ENCODE measurements at regions of chr3 and their contacts with region 1.

Region 1: DNA sequence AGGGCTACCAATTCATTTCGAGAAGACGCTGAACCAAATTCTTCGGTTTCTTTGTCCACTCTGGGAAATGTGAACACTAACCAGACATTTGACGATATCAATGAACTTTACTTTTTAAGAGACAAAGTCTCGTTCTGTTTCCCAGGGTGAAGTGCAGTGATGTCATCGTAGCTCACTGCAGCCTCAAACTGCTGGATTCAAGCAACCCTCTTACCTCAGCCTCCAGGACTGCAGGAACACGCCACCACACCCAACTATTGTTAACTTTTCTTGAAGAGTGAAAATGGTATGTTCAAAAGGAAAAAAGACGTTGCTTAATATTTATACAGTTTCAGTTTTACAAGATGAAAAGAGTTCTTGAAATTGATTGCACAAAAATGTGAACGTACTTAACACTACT is 30.6 kb downstream of the MB21D2 start:
- DNase-seq: no peak
- H3K4me3 Mint-ChIP-seq: peak overlapping the region; percentile 61
- H3K27ac Mint-ChIP-seq: peak overlapping the region; percentile 80
- H3K4me1 Mint-ChIP-seq: peaks cover 75% of the 10 kb centered on the region
- H3K27me3 Mint-ChIP-seq: no peaks in the 10 kb centered on the region

Region 2: GRCh38 chr3:192899540-192899982 is 12.5 kb after region 1 on chr3:
- CTCF ChIA-PET with region 1: interaction called, 5 read pairs
- POLR2A ChIA-PET with region 1: interaction called, 93 read pairs
- DNase-seq: no peak
- H3K4me3 Mint-ChIP-seq: no peak overlapping the region
- H3K27ac Mint-ChIP-seq: peak overlapping the region; percentile 97
- H3K4me1 Mint-ChIP-seq: peaks cover 78% of the 10 kb centered on the region
- H3K27me3 Mint-ChIP-seq: peaks cover 2% of the 10 kb centered on the region

Measured in activated CD4-positive, alpha-beta memory T cell treated with anti-CD3 and anti-CD28 coated beads, Interleukin-2, amount 10 ng/mL, durations not matched to agents 7 days and 5 days (primary cell).